ENCODE measurements at regions of chr20 and their contacts with region 1.

Region 1: GRCh38 chr20:11777387-11778205 is 140.1 kb upstream of the BTBD3 start:
- DNase-seq: peak; percentile 79
- H3K4me3 ChIP-seq: peak overlapping the region in 2 of 3 experiments; percentile 20 to 60
- H3K27ac ChIP-seq: peak overlapping the region; percentile 87
- H3K4me1 ChIP-seq: peaks cover 21% of the 10 kb centered on the region
- H3K27me3 ChIP-seq: no peaks in the 10 kb centered on the region
- CTCF ChIP-seq: no peak
- POLR2A ChIP-seq: no peak

Region 2: GRCh38 chr20:11454966-11455799 is 322.4 kb before region 1 on chr20:
- CTCF ChIA-PET with region 1: no interaction called
- POLR2A ChIA-PET with region 1: no interaction called
- dilution Hi-C with region 1: no loop called
- intact Hi-C with region 1: loop called (anchors 2 kb)
- DNase-seq: peak; percentile 93
- H3K4me3 ChIP-seq: peak overlapping the region in 1 of 3 experiments; percentile 27
- H3K27ac ChIP-seq: peak overlapping the region; percentile 93
- H3K4me1 ChIP-seq: peaks cover 38% of the 10 kb centered on the region
- H3K27me3 ChIP-seq: no peaks in the 10 kb centered on the region
- CTCF ChIP-seq: no peak
- POLR2A ChIP-seq: peak; percentile 10

Region 3: GRCh38 chr20:11686820-11687543 is 90.6 kb before region 1 on chr20:
- CTCF ChIA-PET with region 1: no interaction called
- POLR2A ChIA-PET with region 1: no interaction called
- dilution Hi-C with region 1: no loop called
- intact Hi-C with region 1: loop called (anchors 5 kb)
- DNase-seq: peak; percentile 27
- H3K4me3 ChIP-seq: peak overlapping the region; percentile 6 to 32 (median 9)
- H3K27ac ChIP-seq: no peak overlapping the region
- H3K4me1 ChIP-seq: peaks cover 5% of the 10 kb centered on the region
- H3K27me3 ChIP-seq: no peaks in the 10 kb centered on the region
- CTCF ChIP-seq: no peak
- POLR2A ChIP-seq: no peak

Region 4: GRCh38 chr20:11740975-11741374 is 36.6 kb before region 1 on chr20:
- CTCF ChIA-PET with region 1: no interaction called
- POLR2A ChIA-PET with region 1: no interaction called
- dilution Hi-C with region 1: no loop called
- intact Hi-C with region 1: loop called (anchors 2 kb)
- DNase-seq: peak; percentile 44
- H3K4me3 ChIP-seq: no peak overlapping the region
- H3K27ac ChIP-seq: no peak overlapping the region
- H3K4me1 ChIP-seq: peaks cover 25% of the 10 kb centered on the region
- H3K27me3 ChIP-seq: no peaks in the 10 kb centered on the region
- CTCF ChIP-seq: no peak
- POLR2A ChIP-seq: no peak

Region 5: GRCh38 chr20:11755071-11755841 is 22.3 kb before region 1 on chr20:
- CTCF ChIA-PET with region 1: no interaction called
- POLR2A ChIA-PET with region 1: no interaction called
- dilution Hi-C with region 1: no loop called
- intact Hi-C with region 1: loop called (anchors 1 kb)
- DNase-seq: peak; percentile 42
- H3K4me3 ChIP-seq: no peak overlapping the region
- H3K27ac ChIP-seq: no peak overlapping the region
- H3K4me1 ChIP-seq: peaks cover 6% of the 10 kb centered on the region
- H3K27me3 ChIP-seq: no peaks in the 10 kb centered on the region
- CTCF ChIP-seq: no peak
- POLR2A ChIP-seq: no peak

Region 6: GRCh38 chr20:11890331-11891080 is 112.9 kb after region 1 on chr20:
- CTCF ChIA-PET with region 1: no interaction called
- POLR2A ChIA-PET with region 1: no interaction called
- dilution Hi-C with region 1: no loop called
- intact Hi-C with region 1: loop called (anchors 1 kb)
- DNase-seq: peak; percentile 95
- H3K4me3 ChIP-seq: peak overlapping the region; percentile 64 to 85 (median 70)
- H3K27ac ChIP-seq: peak overlapping the region; percentile 62
- H3K4me1 ChIP-seq: peaks cover 19% of the 10 kb centered on the region
- H3K27me3 ChIP-seq: peaks cover 0 to 13% of the 10 kb centered on the region in 2 experiments
- CTCF ChIP-seq: no peak
- POLR2A ChIP-seq: no peak

Region 7: DNA sequence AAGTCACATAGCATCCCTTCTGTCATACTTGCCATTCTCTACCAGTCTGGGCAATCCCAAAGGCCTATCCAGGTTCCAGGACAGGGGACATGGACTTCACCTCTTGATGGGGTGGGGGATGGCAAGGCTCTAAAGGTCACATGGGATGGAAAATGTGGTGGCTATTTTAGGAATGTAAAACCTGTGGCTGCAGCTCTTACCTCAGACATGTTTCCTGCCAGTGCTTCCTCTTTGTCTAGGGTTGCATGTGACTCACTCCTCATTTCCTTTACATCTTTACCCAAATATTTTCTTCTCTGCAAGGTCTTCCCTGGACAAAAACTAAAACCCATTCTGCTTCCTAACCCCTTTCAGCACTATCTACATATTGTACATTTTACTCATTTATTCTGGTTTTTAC is 275.8 kb after region 1 on chr20:
- CTCF ChIA-PET with region 1: no interaction called
- POLR2A ChIA-PET with region 1: no interaction called
- dilution Hi-C with region 1: no loop called
- intact Hi-C with region 1: loop called (anchors 1 kb)
- DNase-seq: peak; percentile 90
- H3K4me3 ChIP-seq: no peak overlapping the region
- H3K27ac ChIP-seq: peak overlapping the region; percentile 90
- H3K4me1 ChIP-seq: peaks cover 34% of the 10 kb centered on the region
- H3K27me3 ChIP-seq: no peaks in the 10 kb centered on the region
- CTCF ChIP-seq: no peak
- POLR2A ChIP-seq: no peak

Measured in endothelial cell of umbilical vein (primary cell).